Activated T-helper 1 cell treated with anti-CD3 and anti-CD28 coated beads, Interleukin-12 subunit alpha, Interleukin-12 subunit beta, Interleukin-2, Interleukin-4 antibody, amounts not matched to agents 30 ng/mL and 10 ng/mL and 1 ng/mL, durations not matched to agents 14 hours and 24 hours and 36 hours (primary cell): ENCODE measurements at regions of chr1 and their contacts with region 1.

Region 1: GRCh38 chr1:37946703-37947360 is at the start of gene INPP5B:
- DNase-seq: peak; percentile 78
- H3K4me3 Mint-ChIP-seq: peak within 1 kb of the TSS; percentile 91
- H3K27ac Mint-ChIP-seq: peak within 1 kb of the TSS; percentile 96
- H3K4me1 Mint-ChIP-seq: peaks cover 19% of the 10 kb centered on the region
- H3K27me3 Mint-ChIP-seq: no peaks in the 10 kb centered on the region
- total RNA-seq, gene INPP5B: 23.6 and 27.2 TPM in 2 replicates

Region 2: GRCh38 chr1:38012363-38013226 is 65.8 kb after region 1 on chr1 and contains the start of gene UTP11:
- intact Hi-C with region 1: loop called (anchors 1 kb)
- DNase-seq: peak; percentile 87
- H3K4me3 Mint-ChIP-seq: peak within 1 kb of the TSS; percentile 96
- H3K27ac Mint-ChIP-seq: peak within 1 kb of the TSS; percentile 93
- H3K4me1 Mint-ChIP-seq: peaks cover 54% of the 10 kb centered on the region
- H3K27me3 Mint-ChIP-seq: no peaks in the 10 kb centered on the region
- total RNA-seq, gene UTP11: 106 and 108 TPM in 2 replicates